ENCODE measurements at regions of chr7 and their contacts with region 1.

Region 1: GRCh38 chr7:17530741-17531417 is 232.4 kb downstream of the AHR start:
- DNase-seq: no peak
- ATAC-seq: peak in 2 of 4 donors; percentile 36 to 39
- H3K4me3 ChIP-seq: peak overlapping the region in 2 of 12 donors; percentile 8 to 11
- H3K27ac ChIP-seq: no peak overlapping the region
- H3K4me1 ChIP-seq: peaks cover 0 to 21% (median 0%) of the 10 kb centered on the region in 12 donors
- H3K27me3 ChIP-seq: no peaks in the 10 kb centered on the region
- CTCF ChIP-seq: peak; percentile 13 to 61 (median 32)
- POLR2A ChIP-seq: no peak

Region 2: GRCh38 chr7:17304926-17305325 is 226.0 kb before region 1 on chr7:
- intact Hi-C with region 1: loop called in 5 of 10 experiments (anchors 5 to 10 kb)
- DNase-seq: no peak
- ATAC-seq: peak in 3 of 4 donors; percentile 29 to 47 (median 43)
- H3K4me3 ChIP-seq: peak overlapping the region in 4 of 12 donors; percentile 3 to 97 (median 12)
- H3K27ac ChIP-seq: peak overlapping the region in 9 of 12 donors; percentile 19 to 98 (median 51)
- H3K4me1 ChIP-seq: peaks cover 0 to 91% (median 63%) of the 10 kb centered on the region in 12 donors
- H3K27me3 ChIP-seq: no peaks in the 10 kb centered on the region
- CTCF ChIP-seq: no peak
- POLR2A ChIP-seq: no peak

Region 3: DNA sequence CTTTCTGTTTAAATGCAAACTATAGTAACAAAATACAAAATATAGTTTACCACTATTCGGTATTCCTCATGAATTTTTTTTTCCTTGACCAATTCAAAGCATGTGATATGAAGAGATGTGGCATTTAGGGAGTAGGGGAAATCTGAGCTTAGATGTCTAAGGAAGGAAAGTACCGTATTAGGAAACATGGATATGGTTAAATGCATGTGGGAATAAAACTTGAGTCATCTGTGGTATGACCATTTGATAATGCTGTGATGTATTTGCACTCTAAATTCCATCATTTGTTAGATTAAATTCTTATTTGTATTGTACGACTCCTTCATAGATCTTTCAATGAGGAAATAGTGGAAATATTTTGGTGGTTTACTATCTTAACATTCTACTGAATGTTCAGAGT is 212.7 kb before region 1 on chr7:
- intact Hi-C with region 1: no loop called
- DNase-seq: no peak
- ATAC-seq: peak in 1 of 4 donors; percentile 34
- H3K4me3 ChIP-seq: no peak overlapping the region
- H3K27ac ChIP-seq: peak overlapping the region in 1 of 12 donors; percentile 7
- H3K4me1 ChIP-seq: peaks cover 6 to 82% (median 45%) of the 10 kb centered on the region in 12 donors
- H3K27me3 ChIP-seq: no peaks in the 10 kb centered on the region
- CTCF ChIP-seq: no peak
- POLR2A ChIP-seq: no peak

Region 4: DNA sequence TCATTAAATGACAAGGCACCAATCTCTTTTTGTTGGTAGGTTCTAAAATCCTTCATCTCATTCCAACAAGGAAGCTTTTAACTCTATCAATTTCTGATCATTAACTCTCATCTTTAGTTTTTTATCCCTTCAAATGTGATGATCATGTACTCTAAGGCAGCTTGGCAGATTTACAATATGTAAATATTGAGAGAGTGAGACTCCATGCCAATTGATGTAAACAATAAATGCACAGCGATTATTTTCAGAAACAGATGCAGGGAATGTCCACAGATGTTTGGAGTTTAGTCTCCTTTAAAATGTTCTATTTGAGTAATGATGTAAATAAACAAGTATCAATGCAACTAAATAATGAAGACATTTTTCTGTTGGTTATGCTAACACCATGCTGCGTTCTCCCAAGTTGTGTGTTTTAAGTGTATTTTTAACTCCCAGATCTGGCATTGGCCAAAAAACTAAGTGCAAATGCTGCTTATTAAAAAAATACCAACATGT is 18.7 kb before region 1 on chr7:
- intact Hi-C with region 1: loop called in 1 of 10 experiments (anchors 2 kb)
- DNase-seq: no peak
- ATAC-seq: no peak
- H3K4me3 ChIP-seq: no peak overlapping the region
- H3K27ac ChIP-seq: no peak overlapping the region
- H3K4me1 ChIP-seq: no peaks in the 10 kb centered on the region
- H3K27me3 ChIP-seq: no peaks in the 10 kb centered on the region
- CTCF ChIP-seq: no peak
- POLR2A ChIP-seq: no peak